GM18951 (cell line): ENCODE measurements at regions of chr12 and their contacts with region 1.

Region 1: GRCh38 chr12:47779301-47779942 is 6.4 kb downstream of the SLC48A1 start:
- POLR2A ChIP-seq: no peak

Region 2: DNA sequence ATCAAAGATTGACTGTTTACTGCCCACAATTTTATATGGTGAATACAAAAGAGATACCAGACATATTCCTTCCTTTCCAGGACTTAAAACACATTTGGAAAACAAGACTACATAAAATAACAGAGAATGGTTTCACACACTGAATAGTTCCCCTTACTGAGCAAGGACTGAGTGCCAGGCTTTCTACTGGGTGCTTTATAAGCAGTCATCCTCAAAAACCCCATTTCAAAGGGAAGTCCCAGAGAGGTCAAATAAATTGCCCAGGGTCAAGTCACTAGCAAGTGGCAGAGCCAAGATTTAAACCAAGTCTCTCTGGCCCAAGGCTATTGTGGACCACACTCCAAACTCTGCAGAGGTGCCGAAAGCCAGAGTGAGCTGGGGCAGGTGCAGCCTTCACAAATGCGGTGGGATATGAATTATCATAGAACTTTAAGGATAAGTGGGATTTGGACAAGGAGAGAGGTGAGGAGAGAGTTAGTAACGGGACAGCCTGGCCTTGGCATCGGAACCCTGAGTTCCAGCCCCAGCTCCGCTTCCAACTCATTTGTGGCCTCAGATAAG is 64.5 kb before region 1 on chr12:
- in situ Hi-C with region 1: loop called (anchors 5 kb)
- POLR2A ChIP-seq: no peak

Region 3: GRCh38 chr12:47742253-47742825 is 37.1 kb before region 1 on chr12:
- in situ Hi-C with region 1: no loop called
- POLR2A ChIP-seq: no peak